ENCODE measurements at regions of chr18 and their contacts with region 1.

Region 1: DNA sequence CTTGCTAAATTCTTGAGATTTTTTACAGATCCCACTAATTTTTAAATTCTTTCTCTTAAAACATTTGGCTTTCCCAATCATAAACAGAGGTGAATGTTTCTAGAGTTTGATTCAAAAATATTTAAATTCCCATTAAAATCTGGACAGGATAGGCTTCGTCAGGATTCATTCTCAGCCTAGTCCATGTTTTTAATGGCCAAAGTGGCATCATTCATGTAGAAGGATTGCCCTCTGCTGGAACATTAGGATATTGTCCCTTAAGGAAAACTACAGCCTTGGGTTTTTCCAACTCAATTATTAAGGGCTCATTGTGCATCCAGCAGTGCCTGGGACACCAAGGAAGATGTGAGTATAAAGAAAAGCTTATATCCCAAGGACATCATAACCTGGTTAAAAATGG is 71.7 kb downstream of the TPGS2 start:
- DNase-seq: no peak
- H3K4me3 ChIP-seq: no peak overlapping the region
- H3K27ac ChIP-seq: peak overlapping the region in 1 of 2 donors; percentile 19
- H3K4me1 ChIP-seq: peaks cover 0 to 4% of the 10 kb centered on the region in 2 donors
- H3K27me3 ChIP-seq: no peaks in the 10 kb centered on the region
- CTCF ChIP-seq: peak; percentile 58 to 63 (median 62)

Region 2: GRCh38 chr18:36580266-36580665 is 176.8 kb before region 1 on chr18:
- intact Hi-C with region 1: loop called (anchors 5 kb)
- DNase-seq: peak in 1 of 2 donors; percentile 77
- H3K4me3 ChIP-seq: no peak overlapping the region
- H3K27ac ChIP-seq: peak overlapping the region; percentile 85 to 91
- H3K4me1 ChIP-seq: peaks cover 0 to 21% of the 10 kb centered on the region in 2 donors
- H3K27me3 ChIP-seq: no peaks in the 10 kb centered on the region
- CTCF ChIP-seq: peak in 1 of 3 experiments; percentile 20

Region 3: DNA sequence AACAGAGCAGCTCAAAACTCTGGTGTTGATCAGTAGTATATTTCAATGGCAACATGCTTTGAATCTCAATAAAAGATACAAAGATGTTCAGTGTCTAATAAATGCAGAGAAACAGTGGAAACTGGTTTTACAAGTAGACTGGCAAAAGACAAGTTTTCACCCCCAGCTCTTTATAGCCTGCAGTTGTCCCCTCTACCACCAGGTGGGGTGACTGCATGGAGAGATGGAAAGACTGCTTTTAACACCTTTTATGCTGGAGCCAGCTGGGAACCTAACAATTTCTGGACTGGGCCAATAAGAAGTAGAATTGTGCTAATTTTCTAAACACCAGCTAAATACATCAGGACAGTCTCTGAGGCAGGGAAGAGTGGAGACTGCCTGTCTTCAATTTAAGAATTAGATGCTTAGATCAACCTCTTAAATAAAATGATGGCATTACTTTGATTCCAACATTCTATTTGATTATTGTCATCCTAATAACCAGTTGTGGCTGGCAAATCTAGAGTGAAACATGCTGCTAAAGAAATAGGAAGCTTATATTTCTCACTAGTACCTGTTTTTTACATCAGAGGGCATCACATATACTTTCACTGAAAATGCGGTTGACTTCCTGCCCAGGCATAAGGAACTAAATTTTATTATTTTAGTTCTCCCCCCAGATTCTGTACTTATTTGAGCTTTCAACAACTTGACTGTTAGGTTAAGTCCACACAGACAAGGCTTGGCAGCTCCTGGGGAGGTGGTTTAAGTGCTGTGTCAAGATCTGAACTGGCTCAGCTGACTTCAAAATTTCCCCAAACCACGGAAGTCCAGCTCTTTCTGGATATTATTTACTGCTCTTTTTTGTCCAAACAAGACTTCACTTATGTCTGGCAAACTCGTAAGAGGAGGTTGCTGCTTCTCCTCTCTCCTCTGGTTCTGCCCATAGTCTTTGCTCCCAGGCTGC is 68.8 kb before region 1 on chr18:
- intact Hi-C with region 1: loop called (anchors 1 kb)
- DNase-seq: peak in 1 of 2 donors; percentile 74
- H3K4me3 ChIP-seq: no peak overlapping the region
- H3K27ac ChIP-seq: no peak overlapping the region
- H3K4me1 ChIP-seq: peaks cover 0 to 6% of the 10 kb centered on the region in 2 donors
- H3K27me3 ChIP-seq: no peaks in the 10 kb centered on the region
- CTCF ChIP-seq: peak; percentile 53 to 87 (median 68)